ENCODE measurements at regions of chr5 and their contacts with region 1.

Region 1: DNA sequence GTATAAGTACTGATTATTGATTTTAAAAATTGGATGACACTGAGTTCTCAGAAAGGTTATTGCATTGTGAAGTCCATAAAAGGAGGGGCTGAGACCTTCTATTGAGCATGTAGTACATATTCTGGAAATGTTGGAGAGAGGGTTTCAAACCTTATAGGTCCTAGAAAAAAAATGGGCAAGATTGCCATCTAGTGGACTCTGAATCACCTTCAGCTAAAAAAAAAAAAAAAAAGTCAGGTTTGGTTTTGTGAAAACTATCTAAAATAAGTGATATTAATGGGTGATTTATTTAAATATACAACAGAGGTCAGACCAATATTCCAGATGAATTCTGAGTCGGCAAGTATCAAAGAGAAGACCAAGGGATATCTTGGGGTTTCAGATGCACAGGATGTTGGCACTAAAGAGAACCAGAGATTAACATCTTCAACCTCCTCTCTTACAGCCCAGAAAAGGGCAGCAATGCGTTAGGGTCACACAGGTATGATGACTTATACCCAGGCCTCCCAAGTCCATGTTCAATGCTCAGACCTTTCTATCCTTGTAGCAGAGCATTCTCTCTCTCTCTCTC is 109.8 kb upstream of the NMUR2 start:
- DNase-seq: no peak
- ATAC-seq: no peak

Region 2: DNA sequence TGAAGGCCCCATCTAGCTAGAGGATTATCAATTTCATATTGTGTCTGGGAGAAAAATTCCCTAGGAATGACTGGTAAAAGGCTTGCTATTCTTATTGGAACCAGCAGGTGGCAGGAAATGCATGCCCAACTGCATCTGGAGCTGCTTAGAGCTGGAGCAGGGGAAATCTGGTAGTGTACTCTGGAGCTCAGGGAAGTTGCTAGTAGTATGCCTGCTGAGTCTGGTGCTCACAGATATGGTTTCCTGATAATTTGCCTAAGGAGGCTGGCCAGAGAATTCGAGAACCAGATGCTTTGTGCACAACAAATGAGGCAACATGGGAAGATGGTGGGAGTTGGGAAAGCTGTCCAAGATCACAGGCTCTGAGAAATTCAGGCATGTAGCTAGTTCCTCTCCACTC is 689.5 kb before region 1 on chr5:
- intact Hi-C with region 1: loop called (anchors 10 kb)
- DNase-seq: peak; percentile 65
- ATAC-seq: peak; percentile 86

Measured in sciatic nerve (tissue), 2 donors.